ENCODE measurements at regions of chr9 and their contacts with region 1.

Region 1: GRCh38 chr9:72038890-72039410 is 21.5 kb downstream of the C9orf57 start:
- DNase-seq: peak; percentile 79
- ATAC-seq: peak; percentile 79
- H3K4me3 Mint-ChIP-seq: no peak overlapping the region
- H3K27ac Mint-ChIP-seq: no peak overlapping the region
- H3K4me1 Mint-ChIP-seq: peaks cover 5% of the 10 kb centered on the region
- H3K27me3 Mint-ChIP-seq: peaks cover 8% of the 10 kb centered on the region

Region 2: DNA sequence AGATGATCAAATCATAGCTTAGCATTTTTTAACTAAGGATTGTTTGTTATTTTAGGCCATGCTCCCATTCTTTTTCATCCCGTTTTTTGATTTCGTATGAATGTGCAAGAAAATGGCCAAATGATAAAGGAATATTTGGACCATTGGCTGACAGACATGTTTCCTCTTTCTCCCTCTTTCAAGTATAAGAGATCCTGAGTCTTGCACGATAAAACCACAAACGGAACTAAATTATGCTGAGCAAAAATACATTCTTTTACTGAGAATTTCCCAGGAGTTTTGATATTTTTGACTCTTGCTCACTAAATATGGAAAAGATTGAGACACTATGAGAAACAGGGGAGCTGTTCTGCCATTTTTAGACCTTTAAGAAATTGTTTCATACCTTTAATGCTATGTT is 1534.1 kb before region 1 on chr9:
- CTCF ChIA-PET with region 1: no interaction called
- POLR2A ChIA-PET with region 1: no interaction called
- intact Hi-C with region 1: no loop called
- DNase-seq: no peak
- ATAC-seq: no peak
- H3K4me3 Mint-ChIP-seq: no peak overlapping the region
- H3K27ac Mint-ChIP-seq: no peak overlapping the region
- H3K4me1 Mint-ChIP-seq: peaks cover 4% of the 10 kb centered on the region
- H3K27me3 Mint-ChIP-seq: no peaks in the 10 kb centered on the region

Region 3: GRCh38 chr9:71966601-71967000 is 72.3 kb before region 1 on chr9:
- CTCF ChIA-PET with region 1: no interaction called
- POLR2A ChIA-PET with region 1: no interaction called
- intact Hi-C with region 1: no loop called
- DNase-seq: no peak
- ATAC-seq: no peak
- H3K4me3 Mint-ChIP-seq: no peak overlapping the region
- H3K27ac Mint-ChIP-seq: no peak overlapping the region
- H3K4me1 Mint-ChIP-seq: no peaks in the 10 kb centered on the region
- H3K27me3 Mint-ChIP-seq: no peaks in the 10 kb centered on the region

Region 4: GRCh38 chr9:71984403-71984802 is 54.5 kb before region 1 on chr9:
- CTCF ChIA-PET with region 1: no interaction called
- POLR2A ChIA-PET with region 1: no interaction called
- intact Hi-C with region 1: no loop called
- DNase-seq: no peak
- ATAC-seq: no peak
- H3K4me3 Mint-ChIP-seq: no peak overlapping the region
- H3K27ac Mint-ChIP-seq: no peak overlapping the region
- H3K4me1 Mint-ChIP-seq: no peaks in the 10 kb centered on the region
- H3K27me3 Mint-ChIP-seq: no peaks in the 10 kb centered on the region

Region 5: GRCh38 chr9:72022841-72023240 is 16.1 kb before region 1 on chr9:
- CTCF ChIA-PET with region 1: interaction called, 18 read pairs
- POLR2A ChIA-PET with region 1: no interaction called
- intact Hi-C with region 1: no loop called
- DNase-seq: no peak
- ATAC-seq: no peak
- H3K4me3 Mint-ChIP-seq: no peak overlapping the region
- H3K27ac Mint-ChIP-seq: no peak overlapping the region
- H3K4me1 Mint-ChIP-seq: no peaks in the 10 kb centered on the region
- H3K27me3 Mint-ChIP-seq: no peaks in the 10 kb centered on the region

Region 6: DNA sequence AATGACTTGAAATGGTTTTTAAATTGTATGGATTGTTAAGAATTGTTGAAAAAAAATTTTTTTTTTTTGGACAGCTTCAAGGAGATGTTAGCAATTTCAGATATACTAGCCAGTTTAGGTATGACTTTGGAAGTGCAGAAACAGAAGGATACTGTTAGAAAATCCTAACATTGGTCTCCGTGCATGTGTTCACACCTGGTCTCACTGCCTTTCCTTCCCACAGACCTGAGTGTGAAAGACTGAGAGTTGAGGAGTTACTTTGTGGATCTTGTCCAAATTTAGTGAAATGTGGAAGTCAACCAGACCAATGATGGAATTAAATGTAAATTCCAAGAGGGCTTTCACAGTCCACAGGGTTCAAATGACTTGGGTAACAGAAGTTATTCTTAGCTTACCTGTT is 212.6 kb after region 1 on chr9:
- CTCF ChIA-PET with region 1: interaction called, 12 read pairs
- POLR2A ChIA-PET with region 1: no interaction called
- intact Hi-C with region 1: no loop called
- DNase-seq: no peak
- ATAC-seq: no peak
- H3K4me3 Mint-ChIP-seq: no peak overlapping the region
- H3K27ac Mint-ChIP-seq: no peak overlapping the region
- H3K4me1 Mint-ChIP-seq: no peaks in the 10 kb centered on the region
- H3K27me3 Mint-ChIP-seq: peaks cover 27% of the 10 kb centered on the region

Region 7: DNA sequence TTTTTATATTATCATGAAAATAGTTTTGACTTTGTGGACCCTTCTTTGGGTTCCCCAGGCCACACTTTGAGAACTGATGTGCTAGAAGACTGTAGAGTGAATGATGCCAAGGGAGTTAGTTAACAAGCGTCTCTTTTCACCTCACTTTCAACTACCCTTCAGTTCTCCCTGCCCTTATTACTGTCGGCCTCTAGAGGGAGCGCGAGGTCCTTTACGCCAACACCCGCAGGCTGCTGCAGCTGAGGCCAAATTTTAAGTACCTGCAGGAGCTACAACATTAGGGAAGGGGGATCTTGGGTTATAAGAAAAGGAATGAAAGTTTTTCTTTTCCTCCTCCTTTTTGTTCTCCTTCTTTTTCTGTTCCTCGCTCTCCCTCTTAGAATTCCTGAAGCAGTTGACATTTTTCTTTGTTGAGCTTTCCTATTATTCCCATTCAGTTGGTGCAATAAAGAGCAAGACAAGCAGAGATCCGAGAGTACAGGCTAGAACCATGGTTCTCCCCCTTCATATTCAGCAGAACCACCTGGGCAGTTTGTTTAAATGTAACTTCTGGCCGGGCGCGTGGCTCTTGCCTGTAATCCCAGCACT is 242.1 kb after region 1 on chr9:
- CTCF ChIA-PET with region 1: interaction called, 185 read pairs
- POLR2A ChIA-PET with region 1: no interaction called
- intact Hi-C with region 1: no loop called
- DNase-seq: peak; percentile 83
- ATAC-seq: peak; percentile 81
- H3K4me3 Mint-ChIP-seq: no peak overlapping the region
- H3K27ac Mint-ChIP-seq: no peak overlapping the region
- H3K4me1 Mint-ChIP-seq: no peaks in the 10 kb centered on the region
- H3K27me3 Mint-ChIP-seq: no peaks in the 10 kb centered on the region

Region 8: GRCh38 chr9:72827950-72828731 is 789.2 kb after region 1 on chr9:
- CTCF ChIA-PET with region 1: interaction called, 3 read pairs
- POLR2A ChIA-PET with region 1: no interaction called
- intact Hi-C with region 1: loop called in 1 of 2 experiments (anchors 10 kb)
- DNase-seq: no peak
- ATAC-seq: no peak
- H3K4me3 Mint-ChIP-seq: no peak overlapping the region
- H3K27ac Mint-ChIP-seq: no peak overlapping the region
- H3K4me1 Mint-ChIP-seq: no peaks in the 10 kb centered on the region
- H3K27me3 Mint-ChIP-seq: peaks cover 6% of the 10 kb centered on the region

Region 9: DNA sequence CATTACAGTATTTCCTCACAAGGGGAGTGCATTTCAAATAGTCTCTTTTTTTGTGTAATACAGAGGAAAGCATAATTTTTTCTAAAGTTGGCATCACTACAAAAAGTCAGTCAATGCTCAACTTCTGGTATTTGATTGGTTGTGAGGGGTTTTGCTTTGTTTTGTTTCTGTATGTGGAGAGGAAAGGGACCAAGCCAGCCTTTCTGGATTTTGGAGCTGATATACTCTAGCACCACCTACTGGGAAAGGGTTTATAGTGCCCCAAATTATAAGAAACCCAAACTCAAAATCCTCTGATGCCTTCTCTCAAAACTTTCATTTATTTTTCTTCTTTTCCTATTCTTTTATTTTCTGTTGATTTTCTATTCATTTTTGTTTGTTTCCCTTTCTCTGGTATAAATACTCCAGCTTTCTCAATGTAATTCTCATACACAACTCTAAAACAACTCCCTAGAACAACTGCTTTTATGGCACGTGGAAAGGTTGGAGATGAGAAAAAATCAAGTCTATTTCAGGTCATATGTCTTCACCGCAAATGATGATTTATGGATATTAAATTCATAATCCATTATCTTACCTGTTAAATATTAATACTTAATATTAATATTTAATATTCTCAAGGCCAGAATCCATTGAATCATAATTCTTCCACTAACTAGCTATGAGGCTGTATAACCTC is 1043.2 kb after region 1 on chr9:
- CTCF ChIA-PET with region 1: interaction called, 3 read pairs
- POLR2A ChIA-PET with region 1: no interaction called
- intact Hi-C with region 1: loop called in 1 of 2 experiments (anchors 10 kb)
- DNase-seq: no peak
- ATAC-seq: no peak
- H3K4me3 Mint-ChIP-seq: no peak overlapping the region
- H3K27ac Mint-ChIP-seq: no peak overlapping the region
- H3K4me1 Mint-ChIP-seq: no peaks in the 10 kb centered on the region
- H3K27me3 Mint-ChIP-seq: peaks cover 3% of the 10 kb centered on the region

Measured in activated CD4-positive, alpha-beta T cell treated with anti-CD3 and anti-CD28 coated beads for 36 hours (primary cell).